WTC11 (cell line): ENCODE measurements at regions of chr22 and their contacts with region 1.

Region 1: DNA sequence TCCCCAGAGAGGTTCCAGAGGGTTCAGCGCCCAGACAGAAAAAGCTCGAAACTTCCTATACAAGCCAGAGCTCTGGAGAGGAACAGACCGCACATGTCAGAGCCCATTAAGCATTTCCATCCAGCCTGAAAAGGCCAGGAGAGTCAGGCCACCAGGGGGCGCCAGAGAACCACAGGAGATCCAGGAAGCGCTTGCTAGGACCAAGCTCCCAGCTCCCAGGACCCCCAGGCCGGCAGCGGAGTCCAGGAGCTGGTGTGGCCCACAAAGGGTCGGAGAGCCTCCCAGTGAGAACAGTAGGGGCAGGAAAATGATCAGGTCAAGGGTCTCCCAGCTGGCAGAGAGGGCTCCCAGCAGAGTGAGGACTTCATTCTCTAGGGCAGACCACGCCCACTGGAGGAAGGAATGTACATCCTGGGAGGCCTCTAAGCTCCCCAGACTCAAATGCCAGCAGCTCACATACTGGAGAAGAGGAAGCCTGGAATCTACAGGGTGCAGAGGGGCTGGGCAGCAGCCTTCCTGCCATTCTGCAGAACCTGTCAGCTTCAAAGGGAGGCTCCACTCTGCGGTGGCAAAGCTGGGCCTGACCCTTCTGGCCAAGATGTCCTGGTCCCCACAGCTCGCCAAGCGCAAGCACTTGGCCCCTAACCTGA is 2.1 kb upstream of the MEI1 start:
- DNase-seq: peak; percentile 98
- ATAC-seq: peak; percentile 87
- H3K4me3 Mint-ChIP-seq: peak overlapping the region; percentile 52
- H3K27ac Mint-ChIP-seq: no peak overlapping the region
- H3K4me1 Mint-ChIP-seq: peaks cover 10% of the 10 kb centered on the region
- H3K27me3 Mint-ChIP-seq: peaks cover 28% of the 10 kb centered on the region
- CTCF ChIP-seq: peak; percentile 99

Region 2: DNA sequence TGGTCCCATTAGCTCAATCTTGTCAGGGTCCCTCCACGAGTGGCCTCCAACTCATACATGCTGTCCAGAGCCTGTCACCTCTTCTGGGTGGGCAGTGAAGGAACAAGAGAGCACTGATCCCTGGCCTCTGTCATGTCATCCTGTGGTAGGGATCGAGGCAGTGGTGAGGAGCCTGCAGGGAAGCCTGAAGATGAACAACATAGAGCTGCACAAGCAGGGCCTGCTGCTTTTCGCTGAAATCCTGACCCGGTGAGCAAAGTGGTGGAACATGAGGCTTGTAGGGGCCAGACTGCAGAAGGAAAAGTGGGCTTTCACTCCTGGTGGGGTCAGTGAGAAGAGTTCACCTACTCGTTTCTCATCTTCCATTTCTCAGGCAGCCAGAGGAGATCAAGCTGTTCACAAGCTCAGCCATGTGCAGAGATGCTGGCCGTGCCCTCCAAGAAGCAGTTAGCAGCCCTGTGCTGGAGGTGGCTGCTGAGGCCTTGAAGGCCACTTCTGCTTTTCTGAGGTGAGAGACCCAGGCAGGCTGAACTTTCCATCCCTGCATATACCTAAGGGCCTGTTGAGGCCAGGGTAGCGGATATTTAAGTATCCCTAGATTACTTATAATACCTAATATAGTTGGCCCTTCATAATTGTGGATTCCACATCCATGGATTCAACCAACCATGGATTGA is 35.0 kb after region 1 on chr22:
- CTCF ChIA-PET with region 1: interaction called, 20 read pairs
- POLR2A ChIA-PET with region 1: no interaction called
- DNase-seq: no peak
- ATAC-seq: no peak
- H3K4me3 Mint-ChIP-seq: no peak overlapping the region
- H3K27ac Mint-ChIP-seq: no peak overlapping the region
- H3K4me1 Mint-ChIP-seq: no peaks in the 10 kb centered on the region
- H3K27me3 Mint-ChIP-seq: no peaks in the 10 kb centered on the region; the same call in 1 of the 2 replicates
- CTCF ChIP-seq: no peak

Region 3: DNA sequence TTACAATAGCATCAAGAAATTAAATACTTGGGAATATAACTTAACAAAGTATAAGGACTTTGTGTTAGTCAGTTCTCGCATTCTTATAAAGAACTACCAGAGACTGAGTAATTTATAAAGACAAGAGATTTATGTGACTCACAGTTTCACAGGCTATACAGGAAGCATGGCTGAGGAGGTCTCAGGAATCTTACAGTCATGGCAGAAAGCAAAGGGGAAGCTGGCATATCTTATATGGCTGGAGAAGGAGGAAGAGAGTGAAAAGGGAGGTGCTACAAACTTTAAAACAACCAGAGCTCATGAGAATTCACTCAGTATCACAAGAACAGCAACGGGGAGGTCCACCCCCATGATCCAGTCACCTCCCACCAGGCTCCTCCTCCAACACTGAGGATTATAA is 71.2 kb after region 1 on chr22:
- CTCF ChIA-PET with region 1: interaction called, 70 read pairs
- POLR2A ChIA-PET with region 1: no interaction called
- DNase-seq: no peak
- ATAC-seq: no peak
- H3K4me3 Mint-ChIP-seq: no peak overlapping the region
- H3K27ac Mint-ChIP-seq: no peak overlapping the region
- H3K4me1 Mint-ChIP-seq: no peaks in the 10 kb centered on the region
- H3K27me3 Mint-ChIP-seq: no peaks in the 10 kb centered on the region; the same call in none of the 2 replicates
- CTCF ChIP-seq: no peak

Region 4: DNA sequence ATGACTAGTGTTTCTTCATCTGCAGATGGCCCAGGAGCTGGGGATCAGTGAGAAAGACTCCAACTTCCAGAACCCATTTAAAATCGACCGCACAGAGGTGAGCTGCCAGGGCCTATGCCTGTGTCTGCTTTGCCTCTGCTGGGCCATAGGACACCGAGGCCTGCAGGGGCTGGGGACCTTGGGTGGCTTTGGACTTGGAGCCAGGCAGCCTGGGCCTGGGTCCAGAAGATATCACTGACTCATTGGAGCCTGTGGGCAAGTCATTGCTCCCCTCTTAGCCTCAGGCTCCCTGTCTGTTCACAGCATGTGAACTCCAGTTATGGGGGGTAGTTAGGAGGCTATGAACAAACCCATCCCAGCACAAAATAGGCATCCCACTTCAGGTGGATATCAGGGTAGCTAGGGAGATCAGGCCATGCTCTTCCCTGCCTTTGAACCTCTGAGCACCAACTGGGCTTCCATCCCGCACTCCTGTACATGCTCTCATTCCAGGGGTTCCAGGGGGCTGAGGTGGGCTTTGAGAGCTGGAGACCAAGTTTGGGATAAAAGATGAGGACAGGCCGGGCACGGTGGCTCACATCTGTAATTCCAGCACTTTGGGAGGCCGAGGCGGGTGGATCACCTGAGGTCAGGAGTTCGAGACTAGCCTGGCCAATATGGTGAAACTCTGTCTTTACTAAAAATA is 116.6 kb after region 1 on chr22:
- CTCF ChIA-PET with region 1: interaction called, 19 read pairs
- POLR2A ChIA-PET with region 1: no interaction called
- DNase-seq: no peak
- ATAC-seq: no peak
- H3K4me3 Mint-ChIP-seq: no peak overlapping the region
- H3K27ac Mint-ChIP-seq: no peak overlapping the region
- H3K4me1 Mint-ChIP-seq: no peaks in the 10 kb centered on the region
- H3K27me3 Mint-ChIP-seq: no peaks in the 10 kb centered on the region
- CTCF ChIP-seq: no peak

Region 5: GRCh38 chr22:41870786-41871185 is 173.5 kb after region 1 on chr22:
- CTCF ChIA-PET with region 1: interaction called, 16 read pairs
- POLR2A ChIA-PET with region 1: no interaction called
- DNase-seq: no peak
- ATAC-seq: no peak
- H3K4me3 Mint-ChIP-seq: no peak overlapping the region
- H3K27ac Mint-ChIP-seq: no peak overlapping the region
- H3K4me1 Mint-ChIP-seq: no peaks in the 10 kb centered on the region
- H3K27me3 Mint-ChIP-seq: no peaks in the 10 kb centered on the region
- CTCF ChIP-seq: no peak

Region 6: DNA sequence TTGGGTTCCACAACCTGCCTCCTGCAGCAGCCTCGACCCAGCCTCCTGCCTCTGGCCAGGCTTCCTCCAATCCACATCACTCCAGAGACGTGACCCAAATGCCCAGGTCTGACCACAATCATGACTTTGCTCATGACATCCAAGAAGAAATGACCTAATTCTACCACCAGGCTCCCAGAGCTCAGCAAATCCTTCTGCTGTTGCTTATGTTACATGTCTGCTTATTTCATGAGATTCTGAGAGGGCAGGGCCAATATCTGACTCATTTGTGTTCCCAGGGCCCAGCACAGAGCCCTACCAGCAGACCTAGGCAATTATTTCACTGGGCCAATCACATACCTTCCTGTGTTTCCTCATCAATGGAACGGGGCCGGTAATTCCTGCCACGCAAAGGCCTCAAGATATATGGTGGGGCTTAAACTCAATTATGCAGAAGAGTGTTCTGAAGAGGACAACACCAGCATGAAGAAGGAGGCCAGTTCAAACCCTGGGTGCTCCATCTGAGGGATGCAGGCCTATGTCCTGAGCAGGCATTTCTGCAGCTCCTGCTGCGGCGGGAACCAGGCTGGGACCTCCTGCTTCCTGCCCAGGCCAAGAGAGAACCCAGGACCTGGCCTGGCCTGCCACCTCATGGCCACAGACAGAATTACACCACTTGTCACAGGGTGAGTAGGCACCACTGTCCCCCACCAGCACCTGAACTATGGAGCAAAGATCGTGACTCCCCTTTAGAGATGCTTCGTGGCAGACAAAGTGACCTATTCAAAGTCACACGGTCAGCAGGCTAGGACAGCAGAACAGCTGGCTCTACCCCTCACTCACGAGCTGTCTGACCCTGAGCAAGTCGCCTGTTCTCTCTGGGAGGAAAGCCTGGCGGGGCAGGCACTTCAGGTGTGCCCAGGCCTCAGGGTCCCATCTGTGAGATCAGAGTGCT is 243.8 kb after region 1 on chr22:
- CTCF ChIA-PET with region 1: interaction called, 54 read pairs
- POLR2A ChIA-PET with region 1: no interaction called
- DNase-seq: peak; percentile 91
- ATAC-seq: peak; percentile 87
- H3K4me3 Mint-ChIP-seq: no peak overlapping the region
- H3K27ac Mint-ChIP-seq: peak overlapping the region; percentile 0; the same call in 1 of the 2 replicates
- H3K4me1 Mint-ChIP-seq: peaks cover 29% of the 10 kb centered on the region
- H3K27me3 Mint-ChIP-seq: no peaks in the 10 kb centered on the region
- CTCF ChIP-seq: peak; percentile 84